H1 (cell line): ENCODE measurements at regions of chr1 and their contacts with region 1.

Region 1: DNA sequence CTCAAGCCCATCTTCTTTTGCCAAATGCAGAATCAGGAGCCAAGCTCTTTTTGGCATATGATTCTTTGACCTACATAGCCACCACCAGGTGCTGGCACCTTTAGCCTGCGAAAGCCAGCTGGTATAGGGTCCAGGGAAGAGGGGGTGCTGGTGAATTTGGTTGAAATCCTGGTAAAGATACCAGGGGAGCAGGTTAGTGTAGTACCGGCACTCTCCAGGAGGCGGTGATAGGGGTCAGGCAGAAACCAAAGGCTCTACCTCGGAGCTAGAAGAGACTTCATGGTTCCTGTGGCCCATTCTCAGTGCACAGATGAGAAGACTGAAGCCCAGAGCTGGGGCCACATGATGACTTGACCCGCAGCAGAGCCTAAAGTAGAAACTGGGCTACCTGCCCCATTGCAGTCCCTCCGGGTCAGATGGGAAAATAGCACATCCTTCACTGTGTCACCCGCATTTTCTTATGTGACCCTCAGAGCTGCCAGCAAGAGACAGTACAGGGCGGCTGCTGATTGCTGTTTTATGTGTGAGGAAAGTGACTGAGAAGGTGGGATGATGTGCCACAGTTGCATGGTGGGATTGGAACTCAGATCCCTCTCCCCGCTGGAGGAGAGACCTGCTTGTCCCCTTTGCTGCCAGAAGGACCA is 36.0 kb upstream of the IL19 start:
- DNase-seq: peak in 1 of 2 experiments; percentile 94
- H3K4me3 ChIP-seq: no peak overlapping the region
- H3K27ac ChIP-seq: no peak overlapping the region
- H3K4me1 ChIP-seq: peaks cover 0 to 3% (median 0%) of the 10 kb centered on the region in 4 experiments; a peak in 2 of 7 replicates
- H3K27me3 ChIP-seq: no peaks in the 10 kb centered on the region
- CTCF ChIP-seq: peak; percentile 66 to 87 (median 86)
- EP300 ChIP-seq: no peak
- POLR2A ChIP-seq: no peak
- RAD21 ChIP-seq: peak; percentile 80 to 84

Region 2: GRCh38 chr1:206663832-206664652 is 70.6 kb before region 1 on chr1:
- CTCF ChIA-PET with region 1: interaction called, 29 read pairs
- POLR2A ChIA-PET with region 1: no interaction called
- DNase-seq: peak in 1 of 2 experiments; percentile 92
- H3K4me3 ChIP-seq: peak overlapping the region; percentile 11 to 54 (median 25); a peak in 7 of 8 replicates
- H3K27ac ChIP-seq: no peak overlapping the region
- H3K4me1 ChIP-seq: peaks cover 0 to 5% (median 1%) of the 10 kb centered on the region in 4 experiments; a peak in 4 of 7 replicates
- H3K27me3 ChIP-seq: peaks cover 0 to 10% (median 3%) of the 10 kb centered on the region in 4 experiments; a peak in 5 of 7 replicates
- CTCF ChIP-seq: peak; percentile 72 to 91 (median 87)
- EP300 ChIP-seq: no peak
- POLR2A ChIP-seq: no peak
- RAD21 ChIP-seq: peak; percentile 88 to 94

Region 3: DNA sequence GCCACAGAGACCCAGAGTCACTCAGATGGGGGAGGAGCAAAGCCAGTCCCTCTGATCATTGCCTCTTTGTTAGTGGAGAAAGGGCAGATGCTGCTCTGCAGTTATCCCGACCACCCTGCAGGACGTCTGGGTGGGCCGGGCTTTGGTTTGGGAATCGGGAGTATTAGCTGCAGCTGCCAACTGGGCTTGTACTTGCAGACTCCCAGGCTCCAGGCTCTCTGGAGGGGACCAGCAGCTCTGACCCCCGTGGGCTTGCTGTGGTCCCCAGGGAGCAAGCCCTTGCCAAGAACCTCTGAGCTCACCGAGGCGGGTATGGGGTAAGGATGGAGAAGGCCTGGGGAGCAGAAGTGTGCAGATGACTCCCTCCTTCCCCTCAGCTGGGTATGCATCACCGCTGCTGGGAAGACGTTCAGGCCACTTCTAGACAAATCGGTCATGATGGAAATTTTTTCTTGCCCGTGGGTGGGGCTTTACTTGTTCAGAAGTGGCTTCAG is 28.3 kb before region 1 on chr1:
- CTCF ChIA-PET with region 1: interaction called, 17 read pairs
- POLR2A ChIA-PET with region 1: no interaction called
- DNase-seq: no peak
- H3K4me3 ChIP-seq: no peak overlapping the region
- H3K27ac ChIP-seq: no peak overlapping the region
- H3K4me1 ChIP-seq: peaks cover 22 to 49% (median 32%) of the 10 kb centered on the region in 4 experiments
- H3K27me3 ChIP-seq: no peaks in the 10 kb centered on the region
- CTCF ChIP-seq: no peak
- EP300 ChIP-seq: no peak
- POLR2A ChIP-seq: no peak
- RAD21 ChIP-seq: no peak

Region 4: GRCh38 chr1:206761159-206761768 is 26.6 kb after region 1 on chr1:
- CTCF ChIA-PET with region 1: interaction called, 19 read pairs
- POLR2A ChIA-PET with region 1: no interaction called
- DNase-seq: no peak
- H3K4me3 ChIP-seq: no peak overlapping the region
- H3K27ac ChIP-seq: no peak overlapping the region
- H3K4me1 ChIP-seq: no peaks in the 10 kb centered on the region
- H3K27me3 ChIP-seq: no peaks in the 10 kb centered on the region; a peak in 1 of 7 replicates
- CTCF ChIP-seq: peak in 1 of 3 experiments; percentile 39; a peak in 2 of 4 replicates
- EP300 ChIP-seq: no peak
- POLR2A ChIP-seq: no peak
- RAD21 ChIP-seq: no peak

Region 5: DNA sequence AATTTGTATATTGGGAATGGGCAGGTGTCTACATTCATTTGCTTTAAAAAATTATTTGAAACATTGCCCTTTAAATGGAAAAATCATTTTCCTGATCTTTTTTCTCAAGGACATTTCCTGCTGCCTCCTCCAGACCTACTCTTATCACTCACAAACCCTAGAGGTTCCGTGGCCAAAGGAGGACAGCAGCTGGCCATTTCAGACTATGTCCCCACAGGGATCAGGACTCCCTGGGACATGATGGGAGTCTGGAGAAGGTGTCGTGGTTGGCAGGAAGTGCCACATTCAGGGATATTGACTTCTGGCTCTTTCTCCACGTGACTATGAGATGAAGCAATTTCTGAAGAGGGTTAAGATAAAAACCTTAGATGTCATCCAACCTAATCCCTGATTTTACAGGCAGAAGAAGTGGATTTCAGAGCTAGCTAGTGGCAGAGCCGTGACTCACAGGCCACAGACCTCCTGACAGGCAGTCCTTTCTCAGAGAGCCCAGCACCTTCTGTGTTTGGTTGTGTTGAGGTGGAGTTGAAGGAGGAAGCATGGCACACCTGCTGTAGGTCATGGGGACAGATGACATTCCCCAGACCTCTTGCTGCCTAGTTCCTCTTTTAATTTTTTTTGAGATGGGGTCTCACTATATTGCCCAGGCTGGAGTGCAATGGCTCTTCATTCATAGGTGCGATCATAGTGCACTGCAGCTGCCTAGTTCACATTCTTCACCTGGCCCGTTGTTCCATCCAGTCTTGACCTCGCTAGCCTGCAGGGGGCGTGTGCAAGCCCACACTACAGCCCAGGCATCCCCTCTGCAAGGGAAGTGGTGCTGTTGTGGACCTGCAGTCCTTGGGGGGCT is 63.1 kb after region 1 on chr1:
- CTCF ChIA-PET with region 1: interaction called, 14 read pairs
- POLR2A ChIA-PET with region 1: no interaction called
- DNase-seq: peak; percentile 25 to 69
- H3K4me3 ChIP-seq: no peak overlapping the region
- H3K27ac ChIP-seq: no peak overlapping the region
- H3K4me1 ChIP-seq: no peaks in the 10 kb centered on the region
- H3K27me3 ChIP-seq: no peaks in the 10 kb centered on the region
- CTCF ChIP-seq: peak; percentile 71 to 98 (median 91)
- EP300 ChIP-seq: no peak
- POLR2A ChIP-seq: no peak
- RAD21 ChIP-seq: peak; percentile 49 to 64

Region 6: DNA sequence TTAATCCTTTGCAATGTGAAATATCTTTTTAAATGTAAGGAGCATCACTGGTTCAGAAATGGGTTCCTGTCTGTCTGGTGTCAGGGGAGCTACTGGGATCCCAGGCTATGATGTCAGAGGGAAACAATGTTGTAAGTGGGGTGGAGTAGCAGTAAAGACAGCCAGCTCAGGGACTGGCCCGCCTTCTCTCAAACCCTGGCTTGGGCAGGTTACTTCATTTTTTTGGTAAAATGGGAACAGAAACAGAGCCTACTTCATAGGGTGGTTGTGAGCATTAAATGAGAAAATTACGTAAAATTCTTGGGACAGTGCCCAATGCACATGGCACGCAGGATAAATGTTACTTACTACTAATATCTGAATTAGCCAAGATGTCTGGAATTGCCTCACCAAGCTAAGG is 100.1 kb after region 1 on chr1:
- CTCF ChIA-PET with region 1: interaction called, 10 read pairs
- POLR2A ChIA-PET with region 1: no interaction called
- DNase-seq: peak in 1 of 2 experiments; percentile 26
- H3K4me3 ChIP-seq: no peak overlapping the region
- H3K27ac ChIP-seq: no peak overlapping the region
- H3K4me1 ChIP-seq: no peaks in the 10 kb centered on the region
- H3K27me3 ChIP-seq: no peaks in the 10 kb centered on the region
- CTCF ChIP-seq: no peak
- EP300 ChIP-seq: no peak
- POLR2A ChIP-seq: no peak
- RAD21 ChIP-seq: no peak